Dorsolateral prefrontal cortex (tissue), 120 donors: ENCODE measurements at regions of chrX and their contacts with region 1.

Region 1: DNA sequence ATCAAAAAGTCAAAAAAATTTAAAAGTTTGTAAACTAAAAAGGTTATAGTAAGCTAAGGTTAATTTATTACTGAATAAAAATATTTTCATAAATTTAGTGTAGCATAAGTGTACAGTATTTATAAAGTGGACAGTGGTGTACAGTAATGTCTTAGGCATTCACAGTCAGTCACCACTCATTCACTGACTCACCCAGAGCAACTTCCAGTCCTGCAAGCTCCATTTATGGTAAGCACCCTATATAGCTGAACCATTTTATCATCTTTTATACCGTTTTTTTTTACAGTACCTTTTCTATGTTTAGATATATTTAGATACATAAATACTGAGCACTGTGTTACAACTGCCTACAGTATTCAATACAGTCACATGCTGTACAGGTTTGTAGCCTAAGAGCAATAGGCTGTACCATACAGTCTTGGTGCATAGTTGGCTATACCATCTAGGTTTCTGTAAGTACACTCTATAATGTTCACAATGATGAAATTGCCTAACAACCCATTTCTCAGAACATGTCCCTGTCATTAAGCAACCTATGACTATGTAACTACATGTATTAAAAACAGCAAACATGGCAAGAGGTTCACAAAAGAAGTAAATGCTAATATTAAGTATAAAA is 18.6 kb downstream of the ACSL4 start:
- DNase-seq: no peak
- H3K4me3 ChIP-seq: no peak overlapping the region
- H3K27ac ChIP-seq: no peak overlapping the region
- H3K27me3 ChIP-seq: peaks cover 0 to 53% (median 4%) of the 10 kb centered on the region in 45 donors
- CTCF ChIP-seq: no peak

Region 2: DNA sequence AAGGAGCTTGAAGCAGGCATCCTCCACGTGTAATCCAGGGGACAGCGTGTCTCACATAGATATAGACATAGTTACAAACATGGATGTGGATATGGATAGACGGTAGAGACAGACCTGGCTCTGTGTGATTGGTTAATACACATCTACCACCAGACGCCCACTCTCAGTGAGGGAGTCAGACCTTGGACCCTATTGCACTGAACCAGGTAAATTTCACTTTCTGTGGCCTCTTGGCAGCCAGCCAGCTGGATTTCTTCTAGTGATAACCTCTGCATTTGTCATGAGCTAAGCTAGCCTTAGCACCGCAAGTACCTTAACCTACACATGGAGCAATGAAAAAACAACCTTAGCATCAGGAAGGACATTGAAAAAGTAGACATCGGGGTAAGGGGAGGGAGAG is 97.8 kb after region 1 on chrX:
- intact Hi-C with region 1: no loop called
- DNase-seq: no peak
- H3K4me3 ChIP-seq: no peak overlapping the region
- H3K27ac ChIP-seq: no peak overlapping the region
- H3K27me3 ChIP-seq: peaks cover 0 to 69% (median 19%) of the 10 kb centered on the region in 45 donors
- CTCF ChIP-seq: no peak

Region 3: DNA sequence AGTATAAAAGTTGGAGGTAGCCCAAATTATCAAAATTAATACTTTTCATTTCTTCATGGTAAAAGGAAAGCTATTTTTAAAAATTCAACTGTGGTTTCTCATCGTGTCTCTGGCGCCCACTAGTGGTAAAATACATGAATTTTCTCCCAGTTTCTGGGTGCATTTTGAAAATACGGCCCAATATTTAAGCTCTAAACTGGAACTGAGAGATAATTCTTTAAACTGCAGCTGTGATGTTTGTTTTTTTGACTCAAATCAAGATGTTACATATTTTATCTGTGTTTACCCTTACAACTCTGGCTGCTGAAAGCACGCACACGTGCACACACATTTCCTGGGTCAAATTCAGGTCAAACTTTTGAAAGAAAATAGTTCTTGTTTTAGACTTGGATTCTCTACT is 142.5 kb after region 1 on chrX:
- intact Hi-C with region 1: loop called in 1 of 2 experiments (anchors 5 kb)
- DNase-seq: no peak
- H3K4me3 ChIP-seq: no peak overlapping the region
- H3K27ac ChIP-seq: peak overlapping the region in 1 of 59 donors; percentile 22
- H3K27me3 ChIP-seq: peaks cover 0 to 42% (median 5%) of the 10 kb centered on the region in 45 donors
- CTCF ChIP-seq: peak; percentile 58 to 86 (median 75)

Region 4: DNA sequence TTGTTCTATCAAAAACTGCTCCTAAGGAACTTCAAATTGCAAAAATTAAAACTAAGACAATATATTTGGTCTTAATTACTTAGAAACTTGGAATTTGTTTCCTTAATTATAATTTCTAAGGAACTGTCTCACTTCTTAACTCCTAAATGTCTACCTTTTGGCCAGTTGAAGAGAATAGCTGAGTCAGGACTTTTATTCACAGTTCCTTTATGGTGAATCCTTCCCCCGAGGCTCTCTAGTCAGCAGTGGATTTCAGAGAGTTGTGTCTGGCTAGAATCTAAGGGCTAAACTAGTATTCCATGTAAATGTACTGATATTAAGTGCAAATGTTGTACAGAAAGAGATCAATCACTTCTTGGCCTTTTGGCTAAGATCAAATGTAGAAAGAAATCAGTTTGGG is 534.1 kb after region 1 on chrX:
- intact Hi-C with region 1: no loop called
- DNase-seq: no peak
- H3K4me3 ChIP-seq: no peak overlapping the region
- H3K27ac ChIP-seq: no peak overlapping the region
- H3K27me3 ChIP-seq: peaks cover 0 to 64% (median 16%) of the 10 kb centered on the region in 45 donors
- CTCF ChIP-seq: no peak